ENCODE measurements at regions of chr6 and their contacts with region 1.

Region 1: DNA sequence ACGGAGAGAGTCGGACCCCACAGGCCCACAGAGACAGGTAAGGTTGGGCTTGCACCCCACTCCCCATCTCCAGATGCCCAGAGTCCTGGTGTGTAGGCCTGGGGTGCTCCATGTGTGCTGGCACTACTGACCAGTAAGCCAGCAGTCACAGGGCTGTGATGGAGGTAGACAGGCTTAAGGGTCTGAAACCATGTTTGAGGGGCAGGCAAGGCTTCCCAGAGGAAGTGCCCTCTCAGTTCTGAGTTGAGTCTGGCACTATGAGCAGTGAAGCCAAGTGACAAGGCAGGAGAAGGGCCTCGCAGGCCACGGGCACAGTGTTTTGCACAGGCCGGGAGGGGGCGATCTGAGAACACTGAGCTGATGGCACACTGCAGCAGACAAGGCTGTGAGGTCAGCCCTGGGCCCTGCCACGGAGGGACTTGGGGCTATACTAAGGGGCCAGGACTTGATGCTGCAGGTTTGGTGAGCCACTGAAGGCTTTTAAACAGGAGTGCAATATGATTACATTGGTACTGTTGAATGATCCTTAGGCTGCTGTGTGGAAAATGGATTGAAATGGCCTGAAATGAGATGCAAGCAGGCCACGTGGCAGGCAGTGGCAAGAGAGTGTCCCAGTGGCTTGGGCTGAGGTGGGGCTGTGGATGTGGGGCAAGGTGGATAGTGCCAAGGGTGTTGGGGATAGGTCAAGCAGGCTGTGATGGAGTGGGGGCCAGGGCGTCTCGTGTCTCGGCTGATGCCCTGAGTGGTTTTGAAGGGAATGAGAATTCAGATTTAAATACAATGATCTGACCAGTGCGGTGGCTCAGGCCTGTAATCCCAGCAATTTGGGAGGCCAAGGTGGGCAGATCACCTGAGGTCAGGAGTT is 20.3 kb downstream of the TTBK1 start:
- ATAC-seq: peak; percentile 62 to 98 (median 78)
- H3K4me3 ChIP-seq: no peak overlapping the region
- H3K27ac ChIP-seq: no peak overlapping the region
- H3K4me1 ChIP-seq: peaks cover 3 to 17% of the 10 kb centered on the region in 2 donors

Region 2: DNA sequence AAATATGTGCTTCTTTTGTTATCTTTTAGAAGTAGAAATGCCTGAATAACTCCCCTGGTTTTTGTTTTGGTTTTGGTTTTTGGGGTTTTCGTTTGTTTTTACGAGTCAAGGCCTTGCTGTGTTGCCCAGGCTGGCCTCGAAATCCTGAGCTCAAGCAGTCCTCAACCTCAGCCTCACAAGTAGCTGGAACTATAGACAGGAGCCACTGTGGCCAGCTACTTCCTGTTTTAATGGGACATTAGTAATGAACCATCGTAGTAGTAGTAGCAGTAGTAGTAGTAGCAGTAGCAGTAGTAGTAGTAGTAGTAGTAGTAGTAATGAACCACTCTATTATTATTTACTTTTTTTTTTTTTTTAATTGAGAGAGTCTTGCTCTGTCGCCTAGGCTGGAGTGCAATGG is 633.7 kb before region 1 on chr6:
- in situ Hi-C with region 1: no loop called
- ATAC-seq: no peak
- H3K4me3 ChIP-seq: no peak overlapping the region
- H3K27ac ChIP-seq: no peak overlapping the region
- H3K4me1 ChIP-seq: no peaks in the 10 kb centered on the region

Region 3: GRCh38 chr6:43334466-43335095 is 71.0 kb after region 1 on chr6:
- in situ Hi-C with region 1: loop called in 1 of 9 experiments (anchors 10 kb)
- ATAC-seq: peak in 5 of 8 experiments; percentile 44 to 84 (median 75)
- H3K4me3 ChIP-seq: no peak overlapping the region
- H3K27ac ChIP-seq: no peak overlapping the region
- H3K4me1 ChIP-seq: no peaks in the 10 kb centered on the region

Region 4: DNA sequence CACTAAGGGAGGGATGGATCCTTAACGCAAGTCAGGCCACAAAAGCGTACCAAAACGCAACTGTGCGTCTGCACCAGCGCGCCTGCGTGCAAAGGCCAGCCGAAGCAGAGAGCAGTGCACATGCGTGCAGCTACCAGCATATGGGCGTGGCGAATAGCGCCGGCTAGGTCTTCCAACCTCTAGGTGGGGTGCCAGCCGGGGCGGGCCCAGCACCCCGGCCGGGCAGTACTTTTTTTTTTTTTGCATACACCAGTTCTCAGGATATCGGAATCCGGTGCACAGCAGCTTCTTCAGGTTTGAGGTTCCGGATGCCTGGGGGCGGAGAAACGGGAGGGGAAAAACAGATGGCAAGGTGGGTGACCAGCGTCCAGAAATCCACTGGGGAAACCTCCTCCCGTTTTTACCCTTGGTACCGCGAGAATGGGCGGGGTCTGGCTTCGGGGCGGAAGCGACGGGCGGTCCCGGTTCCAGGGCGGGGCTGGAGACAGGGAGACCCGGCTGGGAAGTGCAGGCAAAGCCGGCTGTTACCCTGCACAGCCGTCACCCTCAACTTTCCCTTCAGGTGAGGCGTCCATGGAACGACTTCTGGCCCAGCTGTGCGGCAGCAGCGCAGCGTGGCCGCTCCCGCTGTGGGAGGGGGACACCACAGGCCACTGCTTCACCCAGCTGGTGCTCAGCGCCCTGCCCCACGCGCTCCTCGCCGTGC is 164.0 kb after region 1 on chr6 and contains the start of gene ABCC10:
- in situ Hi-C with region 1: loop called in 1 of 9 experiments (anchors 25 kb)
- ATAC-seq: peak; percentile 87 to 95 (median 93)
- H3K4me3 ChIP-seq: peak within 1 kb of the TSS; percentile 49 to 76 (median 57)
- H3K27ac ChIP-seq: peak within 1 kb of the TSS; percentile 79 to 90
- H3K4me1 ChIP-seq: peaks cover 12 to 13% of the 10 kb centered on the region in 2 donors
- total RNA-seq, gene ABCC10: 10.3 to 70.3 (median 16.4) TPM

Region 5: GRCh38 chr6:43516697-43517504 is 253.4 kb after region 1 on chr6 and contains the starts of genes POLR1C and YIPF3:
- in situ Hi-C with region 1: loop called in 1 of 9 experiments (anchors 25 kb)
- ATAC-seq: peak; percentile 90 to 94 (median 92)
- H3K4me3 ChIP-seq: peak within 1 kb of the TSS; percentile 75 to 92 (median 77)
- H3K27ac ChIP-seq: peak within 1 kb of the TSS; percentile 91 to 93
- H3K4me1 ChIP-seq: peaks cover 21 to 28% of the 10 kb centered on the region in 2 donors
- total RNA-seq, gene POLR1C: 27.7 to 56.9 (median 41.8) TPM
- total RNA-seq, gene YIPF3: 59.3 to 142 (median 101) TPM